Sigmoid colon (tissue), 7 donors: ENCODE measurements at regions of chr12 and their contacts with region 1.

Region 1: DNA sequence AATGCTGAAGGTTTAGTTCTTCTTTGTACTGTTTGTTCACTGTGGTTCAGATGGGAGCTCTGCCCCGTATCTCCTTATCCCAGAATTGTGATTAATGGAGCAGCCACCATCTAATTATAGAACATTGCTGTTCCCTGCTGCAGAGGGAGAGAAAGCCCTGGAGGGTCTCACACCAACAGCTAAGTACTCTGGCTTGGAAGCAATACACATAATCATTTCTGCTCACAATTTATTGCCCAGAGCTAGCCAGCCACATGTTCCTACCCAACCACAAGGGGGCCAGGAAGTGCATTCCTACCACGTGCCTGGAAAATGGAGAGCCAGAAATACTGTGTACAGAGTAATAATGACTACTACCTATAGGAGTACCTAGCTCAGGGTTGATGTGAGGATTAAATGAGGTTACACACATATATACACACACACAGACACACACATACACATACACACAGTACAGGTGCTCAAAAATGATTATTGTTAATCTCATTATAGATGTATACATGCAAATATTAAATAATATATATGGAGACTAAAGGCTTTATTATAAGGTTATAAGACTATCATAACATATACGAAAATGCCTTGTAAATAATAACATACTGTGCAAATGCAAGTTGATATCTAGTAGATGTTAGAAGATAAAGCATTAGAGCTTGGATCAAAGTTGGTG is 22.3 kb downstream of the MSRB3 start:
- DNase-seq: no peak
- H3K4me3 ChIP-seq: no peak overlapping the region
- H3K27ac ChIP-seq: peak overlapping the region in 3 of 4 donors; percentile 7 to 26 (median 24)
- H3K4me1 ChIP-seq: peaks cover 0 to 83% (median 52%) of the 10 kb centered on the region in 4 donors
- H3K27me3 ChIP-seq: no peaks in the 10 kb centered on the region
- CTCF ChIP-seq: peak in 2 of 4 experiments; percentile 12 to 34
- EP300 ChIP-seq: no peak
- POLR2A ChIP-seq: no peak

Region 2: DNA sequence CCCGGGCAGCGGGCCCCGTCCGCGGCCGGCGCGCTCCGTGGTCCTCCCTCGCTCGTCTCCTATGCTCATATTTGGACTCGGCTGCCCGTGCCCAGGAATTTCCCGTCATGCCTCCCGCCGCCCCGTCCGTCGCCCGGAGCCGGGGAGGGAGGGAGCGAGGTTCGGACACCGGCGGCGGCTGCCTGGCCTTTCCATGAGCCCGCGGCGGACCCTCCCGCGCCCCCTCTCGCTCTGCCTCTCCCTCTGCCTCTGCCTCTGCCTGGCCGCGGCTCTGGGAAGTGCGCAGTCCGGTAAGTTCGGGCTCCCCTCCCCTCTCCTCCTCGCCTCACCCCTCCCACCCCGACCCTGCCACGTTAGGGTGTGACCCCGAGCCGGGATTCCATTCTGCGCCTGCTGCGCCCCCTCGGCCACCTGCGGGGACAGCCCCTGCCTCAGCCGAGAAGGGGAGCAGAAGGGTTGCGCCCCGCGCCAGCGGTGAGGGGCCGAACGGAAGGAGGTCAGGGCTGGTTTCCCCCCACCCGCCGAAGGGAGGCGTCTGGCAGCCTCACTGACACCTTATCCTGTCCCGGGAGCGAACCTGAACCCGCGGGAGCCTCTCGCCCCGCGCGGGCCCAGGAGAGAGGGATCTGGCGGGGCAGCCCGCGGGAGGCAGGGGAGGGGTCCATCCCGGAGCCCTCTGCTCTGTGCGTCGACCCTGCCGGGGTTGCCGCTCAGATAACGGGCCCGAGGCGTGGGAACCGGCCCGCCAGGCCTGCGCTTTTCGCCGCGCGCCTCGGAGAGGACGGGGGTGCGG is 22.0 kb before region 1 on chr12 and contains the start of gene MSRB3:
- intact Hi-C with region 1: loop called (anchors 2 kb)
- DNase-seq: peak; percentile 92
- H3K4me3 ChIP-seq: peak within 1 kb of the TSS; percentile 82 to 97 (median 93)
- H3K27ac ChIP-seq: peak within 1 kb of the TSS; percentile 96 to 98 (median 98)
- H3K4me1 ChIP-seq: peaks cover 0 to 51% (median 43%) of the 10 kb centered on the region in 4 donors
- H3K27me3 ChIP-seq: no peaks in the 10 kb centered on the region
- CTCF ChIP-seq: no peak
- EP300 ChIP-seq: peak in 1 of 4 donors; percentile 23
- POLR2A ChIP-seq: peak; percentile 80 to 89
- total RNA-seq, gene MSRB3: 159 to 232 (median 223) TPM